ENCODE measurements at regions of chr2 and their contacts with region 1.

Region 1: GRCh38 chr2:37196320-37197195 is at the start of gene CEBPZOS:
- DNase-seq: peak; percentile 92
- ATAC-seq: peak; percentile 88
- H3K4me3 Mint-ChIP-seq: peak within 1 kb of the TSS; percentile 96
- H3K27ac Mint-ChIP-seq: peak within 1 kb of the TSS; percentile 97
- H3K4me1 Mint-ChIP-seq: peaks cover 39% of the 10 kb centered on the region
- H3K27me3 Mint-ChIP-seq: no peaks in the 10 kb centered on the region
- CTCF ChIP-seq: no peak
- total RNA-seq, gene CEBPZOS: 43.7 to 48.4 TPM

Region 2: DNA sequence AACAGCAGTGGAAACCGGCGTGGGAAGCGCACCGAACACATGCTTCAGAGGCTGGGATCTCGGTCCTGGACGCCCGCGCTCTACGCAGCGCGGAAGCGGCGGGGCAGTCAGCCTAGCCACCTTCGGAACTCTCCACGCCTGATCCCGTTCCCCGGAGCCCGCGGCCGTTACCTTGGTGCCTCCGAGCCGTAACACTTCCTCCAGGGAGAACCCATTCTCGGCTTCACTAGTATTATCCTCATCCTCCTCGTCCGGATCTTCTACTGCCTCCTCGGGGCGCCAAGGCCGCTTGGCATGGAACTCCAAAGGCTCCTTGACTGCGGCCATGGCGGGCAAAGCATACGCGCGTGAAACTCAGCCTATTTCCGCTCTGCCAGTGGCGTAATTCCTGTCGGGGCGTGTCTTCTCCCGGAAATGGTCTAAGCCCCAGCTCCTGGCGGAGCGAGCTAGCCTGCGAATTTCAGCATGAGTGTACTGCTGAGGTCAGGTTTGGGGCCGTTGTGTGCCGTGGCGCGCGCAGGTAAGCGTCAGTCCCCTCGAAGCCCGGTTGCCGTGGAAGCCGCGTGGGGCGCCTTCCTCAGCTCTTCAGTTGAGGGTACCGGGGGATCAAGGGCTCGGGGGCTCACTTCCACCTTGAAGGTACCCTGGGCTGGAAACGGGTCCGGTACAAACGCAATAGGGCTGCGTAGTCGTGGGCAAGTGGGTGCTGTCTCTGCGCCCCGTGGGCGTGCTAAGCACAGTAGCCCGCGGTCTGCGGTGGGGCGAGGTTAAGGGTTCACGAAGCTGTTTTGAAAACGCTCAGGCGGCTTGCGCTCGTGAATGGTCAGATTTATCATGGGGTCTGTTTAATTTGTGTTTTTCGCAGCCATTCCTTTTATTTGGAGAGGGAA is 34.9 kb after region 1 on chr2 and contains the starts of genes CEBPZ and NDUFAF7:
- CTCF ChIA-PET with region 1: interaction called, 3 read pairs
- POLR2A ChIA-PET with region 1: interaction called, 8 read pairs
- intact Hi-C with region 1: loop called (anchors 5 kb)
- DNase-seq: peak; percentile 95
- ATAC-seq: peak; percentile 95
- H3K4me3 Mint-ChIP-seq: no peak within 1 kb of the TSS
- H3K27ac Mint-ChIP-seq: no peak within 1 kb of the TSS
- H3K4me1 Mint-ChIP-seq: peaks cover 31% of the 10 kb centered on the region
- H3K27me3 Mint-ChIP-seq: no peaks in the 10 kb centered on the region
- CTCF ChIP-seq: no peak
- total RNA-seq, gene CEBPZ: 69.2 to 78.6 TPM
- total RNA-seq, gene NDUFAF7: 18.4 to 22.5 TPM

Measured in activated CD8-positive, alpha-beta T cell treated with anti-CD3 and anti-CD28 coated beads for 36 hours (primary cell).